ENCODE measurements at regions of chr5 and their contacts with region 1.

Region 1: GRCh38 chr5:154654486-154655371 is 100.4 kb upstream of the LARP1 start:
- DNase-seq: no peak
- H3K4me3 ChIP-seq: no peak overlapping the region
- H3K27ac ChIP-seq: peak overlapping the region in 1 of 59 donors; percentile 21
- H3K27me3 ChIP-seq: no peaks in the 10 kb centered on the region
- CTCF ChIP-seq: no peak

Region 2: GRCh38 chr5:154562244-154562880 is 92.4 kb before region 1 on chr5:
- intact Hi-C with region 1: no loop called
- DNase-seq: no peak
- H3K4me3 ChIP-seq: no peak overlapping the region
- H3K27ac ChIP-seq: no peak overlapping the region
- H3K27me3 ChIP-seq: peaks cover 0 to 17% (median 0%) of the 10 kb centered on the region in 45 donors
- CTCF ChIP-seq: no peak

Region 3: GRCh38 chr5:155004138-155004744 is 349.5 kb after region 1 on chr5:
- intact Hi-C with region 1: loop called in 1 of 2 experiments (anchors 10 kb)
- DNase-seq: peak in 1 of 10 donors; percentile 48
- H3K4me3 ChIP-seq: no peak overlapping the region
- H3K27ac ChIP-seq: no peak overlapping the region
- H3K27me3 ChIP-seq: no peaks in the 10 kb centered on the region
- CTCF ChIP-seq: peak in 53 of 56 donors; percentile 13 to 74 (median 49)